Activated B cell treated with CpG ODN at 0.5 μM for 24 hours (primary cell): ENCODE measurements at regions of chr6 and their contacts with region 1.

Region 1: DNA sequence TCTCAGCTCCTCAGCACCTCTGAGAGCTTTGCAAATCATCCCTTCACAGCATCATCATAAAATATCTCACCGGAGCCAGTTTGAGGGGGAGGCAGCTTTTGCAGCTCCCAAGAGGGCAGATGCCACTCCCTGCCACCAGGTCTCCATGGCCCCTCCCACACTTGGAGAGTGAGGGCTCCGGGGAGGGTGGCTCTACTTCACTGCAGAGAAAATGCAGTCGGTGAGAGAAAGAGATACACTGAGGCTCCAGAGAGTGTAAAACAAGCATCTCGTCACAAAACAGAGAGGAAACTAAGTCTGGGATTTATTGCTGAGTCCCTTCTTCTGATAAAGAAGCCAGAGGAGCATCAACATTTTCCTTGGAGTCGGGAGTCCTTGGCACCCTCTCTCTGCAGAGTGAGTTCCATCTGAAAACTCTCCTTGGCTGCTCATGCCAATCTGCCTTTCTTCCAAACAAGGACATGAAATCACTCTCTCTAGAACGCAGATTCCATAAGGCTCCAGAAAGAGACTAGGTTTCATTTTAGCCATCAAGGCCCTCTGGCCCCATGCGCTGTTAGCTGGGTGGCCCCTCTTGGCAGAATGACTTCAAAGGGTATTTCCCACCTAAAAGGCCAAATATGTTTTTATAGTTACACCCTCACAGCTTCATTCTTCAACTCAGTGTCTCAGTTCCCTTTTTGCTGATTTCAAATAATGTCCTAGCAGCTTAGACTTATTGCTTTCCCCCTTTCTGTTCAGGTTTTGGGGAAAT is 70.6 kb upstream of the F13A1 start:
- DNase-seq: peak; percentile 42
- ATAC-seq: peak; percentile 78
- H3K4me3 Mint-ChIP-seq: peak overlapping the region; percentile 77
- H3K27ac Mint-ChIP-seq: peak overlapping the region; percentile 96
- H3K4me1 Mint-ChIP-seq: peaks cover 63% of the 10 kb centered on the region
- H3K27me3 Mint-ChIP-seq: peaks cover 2% of the 10 kb centered on the region
- CTCF ChIP-seq: no peak

Region 2: DNA sequence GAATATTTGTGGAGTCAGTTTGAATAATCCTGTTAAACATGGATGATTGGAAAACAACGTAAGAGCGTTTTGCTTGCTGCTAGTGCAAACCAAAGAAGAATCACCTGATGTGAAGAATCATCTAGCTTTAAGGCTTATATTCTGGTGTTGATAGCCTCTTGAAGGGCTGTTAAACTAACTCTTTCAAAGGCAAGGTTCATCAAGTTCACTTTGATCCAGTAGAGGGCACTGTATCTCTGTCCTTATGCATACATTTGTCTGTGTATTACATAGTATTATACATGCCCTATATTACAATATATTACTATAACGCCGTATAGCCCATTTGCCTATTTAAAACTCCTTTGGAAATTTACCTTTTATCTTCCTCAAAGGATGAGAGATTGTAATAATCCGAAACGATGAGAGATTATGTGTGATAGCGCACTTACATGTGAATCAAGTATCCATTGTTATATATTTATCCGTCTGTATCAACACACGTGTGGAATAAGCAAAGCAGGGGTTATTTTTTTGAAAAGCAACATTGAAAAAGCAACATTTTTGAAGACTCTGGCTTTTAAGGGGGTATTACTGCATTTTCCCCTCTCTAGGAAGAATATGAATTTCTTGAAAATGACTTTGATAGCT is 333.5 kb before region 1 on chr6:
- CTCF ChIA-PET with region 1: no interaction called
- POLR2A ChIA-PET with region 1: no interaction called
- intact Hi-C with region 1: loop called (anchors 5 kb)
- DNase-seq: no peak
- ATAC-seq: peak; percentile 66
- H3K4me3 Mint-ChIP-seq: no peak overlapping the region
- H3K27ac Mint-ChIP-seq: no peak overlapping the region
- H3K4me1 Mint-ChIP-seq: no peaks in the 10 kb centered on the region
- H3K27me3 Mint-ChIP-seq: peaks cover 37% of the 10 kb centered on the region
- CTCF ChIP-seq: peak; percentile 42

Region 3: GRCh38 chr6:6315660-6316059 is 75.4 kb before region 1 on chr6:
- CTCF ChIA-PET with region 1: interaction called, 3 read pairs
- POLR2A ChIA-PET with region 1: interaction called, 9 read pairs
- intact Hi-C with region 1: loop called (anchors 2 kb)
- DNase-seq: no peak
- ATAC-seq: peak; percentile 35
- H3K4me3 Mint-ChIP-seq: no peak overlapping the region
- H3K27ac Mint-ChIP-seq: no peak overlapping the region
- H3K4me1 Mint-ChIP-seq: peaks cover 19% of the 10 kb centered on the region
- H3K27me3 Mint-ChIP-seq: peaks cover 29% of the 10 kb centered on the region
- CTCF ChIP-seq: peak; percentile 63

Region 4: GRCh38 chr6:6331946-6332601 is 59.0 kb before region 1 on chr6:
- CTCF ChIA-PET with region 1: interaction called, 15 read pairs
- POLR2A ChIA-PET with region 1: interaction called, 149 read pairs
- intact Hi-C with region 1: loop called (anchors 1 kb)
- DNase-seq: no peak
- ATAC-seq: peak; percentile 72
- H3K4me3 Mint-ChIP-seq: peak overlapping the region; percentile 81
- H3K27ac Mint-ChIP-seq: peak overlapping the region; percentile 100
- H3K4me1 Mint-ChIP-seq: peaks cover 48% of the 10 kb centered on the region
- H3K27me3 Mint-ChIP-seq: no peaks in the 10 kb centered on the region
- CTCF ChIP-seq: no peak

Region 5: DNA sequence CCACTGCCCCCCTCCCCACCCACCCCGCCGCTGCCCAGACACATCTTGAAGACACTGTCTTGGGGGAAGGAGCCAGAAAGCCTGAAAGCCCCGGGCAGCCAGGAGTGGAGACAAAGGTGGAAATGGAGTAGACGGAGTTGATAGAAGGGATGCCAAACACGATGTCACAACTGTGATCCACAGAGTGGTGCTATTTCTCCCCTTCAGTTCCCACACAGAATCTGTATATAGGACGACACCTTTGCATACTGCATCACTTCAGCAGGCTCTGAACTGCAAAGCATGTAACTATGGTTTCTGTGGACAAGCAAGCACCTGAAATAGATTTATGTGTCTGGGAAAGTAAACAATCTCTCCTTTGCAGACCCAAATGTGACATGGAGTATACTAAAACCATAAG is 14.2 kb before region 1 on chr6:
- CTCF ChIA-PET with region 1: interaction called, 3 read pairs
- POLR2A ChIA-PET with region 1: interaction called, 4 read pairs
- intact Hi-C with region 1: loop called (anchors 1 kb)
- DNase-seq: no peak
- ATAC-seq: peak; percentile 34
- H3K4me3 Mint-ChIP-seq: no peak overlapping the region
- H3K27ac Mint-ChIP-seq: no peak overlapping the region
- H3K4me1 Mint-ChIP-seq: peaks cover 4% of the 10 kb centered on the region
- H3K27me3 Mint-ChIP-seq: no peaks in the 10 kb centered on the region
- CTCF ChIP-seq: no peak

Region 6: GRCh38 chr6:6402006-6402405 is 11.0 kb after region 1 on chr6:
- CTCF ChIA-PET with region 1: interaction called, 4 read pairs
- POLR2A ChIA-PET with region 1: interaction called, 118 read pairs
- intact Hi-C with region 1: loop called (anchors 1 kb)
- DNase-seq: no peak
- ATAC-seq: no peak
- H3K4me3 Mint-ChIP-seq: no peak overlapping the region
- H3K27ac Mint-ChIP-seq: no peak overlapping the region
- H3K4me1 Mint-ChIP-seq: peaks cover 6% of the 10 kb centered on the region
- H3K27me3 Mint-ChIP-seq: peaks cover 17% of the 10 kb centered on the region
- CTCF ChIP-seq: no peak

Region 7: DNA sequence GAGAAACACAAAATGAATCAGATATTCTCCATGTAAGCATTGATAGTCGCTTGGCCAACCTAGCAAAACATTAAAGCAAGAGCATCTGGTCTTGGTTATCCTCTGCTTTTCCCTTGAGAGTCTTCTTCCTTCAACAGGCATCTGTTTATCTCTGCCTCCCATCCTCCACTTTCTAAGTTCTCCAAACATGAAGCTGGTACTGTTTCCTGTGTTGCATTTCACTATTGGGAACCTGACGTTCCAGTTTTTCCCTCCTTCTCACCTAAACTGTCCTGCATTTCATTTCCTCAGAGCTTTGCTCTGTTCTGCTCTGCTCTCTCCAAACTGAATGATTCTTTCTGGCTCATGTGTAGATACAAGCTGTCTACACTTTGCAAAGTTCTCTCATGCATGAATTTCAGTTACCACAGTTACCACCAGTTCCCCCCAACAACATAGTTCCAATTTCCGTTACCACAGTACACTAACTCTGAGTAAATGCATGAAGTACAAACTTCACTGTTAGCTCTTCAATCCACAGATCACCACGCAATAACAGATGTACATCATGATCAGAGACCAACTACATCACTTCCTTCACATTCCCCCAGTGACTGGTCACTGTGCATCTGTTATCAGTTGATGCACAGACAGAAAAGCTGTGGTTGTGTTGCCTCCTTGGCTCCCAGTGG is 16.2 kb after region 1 on chr6:
- CTCF ChIA-PET with region 1: interaction called, 4 read pairs
- POLR2A ChIA-PET with region 1: interaction called, 118 read pairs
- intact Hi-C with region 1: loop called (anchors 1 kb)
- DNase-seq: no peak
- ATAC-seq: peak; percentile 79
- H3K4me3 Mint-ChIP-seq: no peak overlapping the region
- H3K27ac Mint-ChIP-seq: no peak overlapping the region
- H3K4me1 Mint-ChIP-seq: peaks cover 13% of the 10 kb centered on the region
- H3K27me3 Mint-ChIP-seq: peaks cover 16% of the 10 kb centered on the region
- CTCF ChIP-seq: no peak

Region 8: GRCh38 chr6:6629402-6629801 is 238.4 kb after region 1 on chr6:
- CTCF ChIA-PET with region 1: no interaction called
- POLR2A ChIA-PET with region 1: no interaction called
- intact Hi-C with region 1: no loop called
- DNase-seq: no peak
- ATAC-seq: no peak
- H3K4me3 Mint-ChIP-seq: no peak overlapping the region
- H3K27ac Mint-ChIP-seq: no peak overlapping the region
- H3K4me1 Mint-ChIP-seq: peaks cover 12% of the 10 kb centered on the region
- H3K27me3 Mint-ChIP-seq: no peaks in the 10 kb centered on the region
- CTCF ChIP-seq: no peak